B cell (primary cell): ENCODE measurements at regions of chr9 and their contacts with region 1.

Region 1: DNA sequence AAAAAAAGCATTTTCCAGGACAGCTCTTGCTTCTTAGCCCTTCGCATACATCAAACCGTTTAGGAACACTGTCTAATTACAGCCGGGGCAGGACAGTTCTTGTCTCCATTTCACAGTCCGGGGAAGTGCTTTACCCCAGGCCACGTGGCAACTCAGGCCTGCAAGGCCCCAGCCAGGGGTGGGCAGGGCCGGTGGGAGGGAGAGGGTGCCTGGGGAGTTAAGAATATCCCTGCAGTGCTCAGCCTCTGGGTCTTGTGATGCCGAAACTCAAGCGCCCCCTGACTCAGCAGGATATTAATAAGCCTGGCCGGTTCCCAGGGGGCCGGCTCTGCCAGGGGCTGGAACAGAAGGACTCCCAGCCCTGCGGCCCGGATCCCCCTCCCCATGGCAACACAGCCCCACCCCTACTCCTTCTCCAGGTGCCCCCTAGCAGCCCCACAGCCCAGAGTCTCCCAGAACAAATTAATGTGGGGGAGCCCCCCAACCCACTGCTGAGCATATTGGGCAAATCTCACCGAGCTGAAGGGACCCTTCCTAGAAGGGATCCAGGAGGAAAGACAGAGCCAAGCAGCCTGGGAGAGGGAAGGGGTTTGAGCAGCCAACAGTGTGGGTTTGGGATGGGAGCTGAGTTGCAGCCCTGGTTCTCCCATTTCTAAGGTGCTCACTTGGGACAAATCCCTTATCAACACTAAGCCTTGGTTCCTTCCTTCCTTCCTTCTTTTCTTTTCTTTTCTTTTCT is 45.3 kb downstream of the PLPP7 start:
- DNase-seq: no peak
- ATAC-seq: no peak
- H3K4me3 ChIP-seq: no peak overlapping the region
- H3K4me3 Mint-ChIP-seq: no peak overlapping the region
- H3K27ac ChIP-seq: no peak overlapping the region
- H3K27ac Mint-ChIP-seq: no peak overlapping the region
- H3K4me1 ChIP-seq: peaks cover 0 to 4% of the 10 kb centered on the region in 2 donors
- H3K4me1 Mint-ChIP-seq: peaks cover 4% of the 10 kb centered on the region
- H3K27me3 ChIP-seq: peaks cover 0 to 4% (median 0%) of the 10 kb centered on the region in 4 experiments
- H3K27me3 Mint-ChIP-seq: no peaks in the 10 kb centered on the region
- CTCF ChIP-seq: no peak

Region 2: GRCh38 chr9:131167146-131167692 is 167.6 kb before region 1 on chr9:
- CTCF ChIA-PET with region 1: interaction called, 10 read pairs
- POLR2A ChIA-PET with region 1: no interaction called
- intact Hi-C with region 1: no loop called
- DNase-seq: no peak
- ATAC-seq: no peak
- H3K4me3 ChIP-seq: no peak overlapping the region
- H3K4me3 Mint-ChIP-seq: no peak overlapping the region
- H3K27ac ChIP-seq: no peak overlapping the region
- H3K27ac Mint-ChIP-seq: no peak overlapping the region
- H3K4me1 ChIP-seq: no peaks in the 10 kb centered on the region
- H3K4me1 Mint-ChIP-seq: no peaks in the 10 kb centered on the region
- H3K27me3 ChIP-seq: no peaks in the 10 kb centered on the region
- H3K27me3 Mint-ChIP-seq: no peaks in the 10 kb centered on the region
- CTCF ChIP-seq: no peak

Region 3: DNA sequence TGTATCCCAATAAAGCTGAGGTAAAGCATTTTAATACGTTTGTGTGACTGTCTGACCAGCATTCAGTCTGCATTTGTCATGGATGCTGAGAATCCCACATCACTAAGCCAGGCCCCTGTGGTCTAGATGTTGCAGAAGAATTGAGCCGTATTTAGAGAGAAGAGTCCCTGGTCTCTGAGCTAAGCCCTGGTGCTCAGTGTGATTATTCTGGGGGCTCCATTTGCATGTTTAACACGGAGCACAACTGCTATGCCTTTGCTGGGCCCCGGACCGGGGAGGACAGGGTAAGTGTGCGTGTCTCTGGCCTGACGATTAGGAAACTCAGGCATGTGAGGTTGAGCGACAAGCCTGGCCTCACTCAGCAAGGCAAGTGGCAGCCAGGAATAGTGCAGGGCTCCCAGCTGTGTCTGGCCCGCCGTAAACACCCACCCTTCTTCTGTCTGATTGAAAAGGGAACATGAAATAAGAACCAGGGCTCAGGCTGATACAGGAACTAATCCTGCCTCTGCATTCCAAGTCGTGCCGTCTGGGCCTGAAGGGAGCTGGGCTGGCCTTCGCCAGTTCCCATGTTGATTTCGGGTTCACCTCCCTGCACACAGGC is 80.8 kb before region 1 on chr9:
- CTCF ChIA-PET with region 1: interaction called, 14 read pairs
- POLR2A ChIA-PET with region 1: interaction called, 5 read pairs
- intact Hi-C with region 1: no loop called
- DNase-seq: peak; percentile 63
- ATAC-seq: peak; percentile 22
- H3K4me3 ChIP-seq: no peak overlapping the region
- H3K4me3 Mint-ChIP-seq: peak overlapping the region; percentile 81
- H3K27ac ChIP-seq: peak overlapping the region; percentile 68 to 95
- H3K27ac Mint-ChIP-seq: peak overlapping the region; percentile 96
- H3K4me1 ChIP-seq: peaks cover 50 to 61% of the 10 kb centered on the region in 2 donors
- H3K4me1 Mint-ChIP-seq: peaks cover 35% of the 10 kb centered on the region
- H3K27me3 ChIP-seq: no peaks in the 10 kb centered on the region
- H3K27me3 Mint-ChIP-seq: no peaks in the 10 kb centered on the region
- CTCF ChIP-seq: no peak

Region 4: DNA sequence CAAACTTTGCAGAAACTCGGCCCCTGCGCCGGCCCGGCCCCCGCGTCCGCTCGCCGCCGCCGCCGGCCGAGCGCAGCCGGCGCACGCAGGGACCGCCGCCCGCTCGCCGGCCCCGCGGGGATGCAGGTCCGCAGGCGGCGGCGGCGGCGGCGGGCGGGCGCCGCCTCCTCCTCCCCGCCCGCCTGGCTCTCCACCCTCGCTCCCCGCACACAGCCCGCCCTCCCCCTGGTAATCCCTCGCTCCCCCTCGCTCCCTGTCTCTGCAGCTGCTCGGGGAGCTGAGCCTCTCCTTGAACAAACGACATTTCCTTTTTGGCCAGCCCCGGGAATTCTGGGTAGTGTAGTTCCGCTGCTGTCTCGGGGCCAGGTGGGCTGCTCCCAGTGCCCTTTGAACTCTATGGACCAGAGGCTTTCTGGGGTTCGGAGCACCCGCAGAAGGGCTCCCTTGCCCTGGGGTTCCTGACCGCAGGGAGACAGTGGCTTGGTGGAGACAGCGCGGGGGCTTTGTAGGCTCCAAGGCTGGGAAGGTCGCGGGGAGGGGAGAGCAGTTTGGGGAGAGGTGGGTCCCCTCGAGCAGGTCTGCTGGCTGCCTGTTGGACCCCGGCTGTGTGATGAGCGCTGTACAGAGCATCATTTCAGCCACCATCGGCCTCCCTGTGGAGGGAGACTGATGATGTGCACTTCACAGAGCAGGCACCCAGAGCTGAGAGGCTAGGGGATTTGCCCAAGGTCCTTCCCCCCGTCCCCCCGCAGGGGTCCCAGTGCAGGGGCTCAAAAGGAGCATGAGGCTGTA is 56.7 kb before region 1 on chr9:
- CTCF ChIA-PET with region 1: interaction called, 16 read pairs
- POLR2A ChIA-PET with region 1: interaction called, 3 read pairs
- intact Hi-C with region 1: loop called (anchors 10 kb)
- DNase-seq: peak; percentile 82
- ATAC-seq: peak; percentile 58
- H3K4me3 ChIP-seq: peak overlapping the region in 4 of 5 experiments; percentile 11 to 95 (median 78)
- H3K4me3 Mint-ChIP-seq: peak overlapping the region; percentile 85
- H3K27ac ChIP-seq: peak overlapping the region; percentile 28 to 71
- H3K27ac Mint-ChIP-seq: peak overlapping the region; percentile 87
- H3K4me1 ChIP-seq: peaks cover 33 to 36% of the 10 kb centered on the region in 2 donors
- H3K4me1 Mint-ChIP-seq: peaks cover 40% of the 10 kb centered on the region
- H3K27me3 ChIP-seq: peaks cover 0 to 16% (median 5%) of the 10 kb centered on the region in 4 experiments
- H3K27me3 Mint-ChIP-seq: peaks cover 10% of the 10 kb centered on the region
- CTCF ChIP-seq: no peak